ENCODE measurements at regions of chr2 and their contacts with region 1.

Region 1: GRCh38 chr2:53767405-53768241 is at the start of gene CHAC2:
- DNase-seq: peak; percentile 88
- ATAC-seq: peak; percentile 96
- H3K4me3 Mint-ChIP-seq: peak within 1 kb of the TSS; percentile 91
- H3K27ac Mint-ChIP-seq: peak within 1 kb of the TSS; percentile 94
- H3K4me1 Mint-ChIP-seq: peaks cover 29% of the 10 kb centered on the region
- H3K27me3 Mint-ChIP-seq: no peaks in the 10 kb centered on the region
- total RNA-seq, gene CHAC2: 17.1 to 18.1 TPM

Region 2: GRCh38 chr2:53786705-53787612 is 19.3 kb after region 1 on chr2 and contains the starts of genes ASB3 and ERLEC1:
- CTCF ChIA-PET with region 1: interaction called, 13 read pairs
- POLR2A ChIA-PET with region 1: interaction called, 97 read pairs
- DNase-seq: peak; percentile 95
- ATAC-seq: peak; percentile 92
- H3K4me3 Mint-ChIP-seq: peak within 1 kb of the TSS; percentile 90
- H3K27ac Mint-ChIP-seq: peak within 1 kb of the TSS; percentile 92
- H3K4me1 Mint-ChIP-seq: peaks cover 37% of the 10 kb centered on the region
- H3K27me3 Mint-ChIP-seq: no peaks in the 10 kb centered on the region
- total RNA-seq, gene ASB3: 25.3 to 25.8 TPM
- total RNA-seq, gene ERLEC1: 19.5 to 20.9 TPM

Measured in activated CD8-positive, alpha-beta T cell treated with anti-CD3 and anti-CD28 coated beads, Interleukin-2, amount 10 ng/mL, durations not matched to agents 7 days and 5 days (primary cell).